GM12878 (cell line): ENCODE measurements at regions of chr2 and their contacts with region 1.

Region 1: GRCh38 chr2:212157012-212157411 is 381.6 kb downstream of the ERBB4 start:
- DNase-seq: no peak
- ATAC-seq: no peak
- H3K4me3 ChIP-seq: no peak overlapping the region
- H3K27ac ChIP-seq: no peak overlapping the region
- H3K4me1 ChIP-seq: no peaks in the 10 kb centered on the region
- H3K27me3 ChIP-seq: no peaks in the 10 kb centered on the region
- CTCF ChIP-seq: no peak
- EP300 ChIP-seq: no peak
- POLR2A ChIP-seq: no peak
- RAD21 ChIP-seq: no peak

Region 2: GRCh38 chr2:212548450-212548819 is 391.4 kb after region 1 on chr2:
- CTCF ChIA-PET with region 1: no interaction called
- POLR2A ChIA-PET with region 1: no interaction called
- RAD21 ChIA-PET with region 1: no interaction called
- SMC1A ChIA-PET with region 1: no interaction called
- in situ Hi-C with region 1: no loop called
- intact Hi-C with region 1: loop called (anchors 5 kb)
- DNase-seq: no peak
- ATAC-seq: no peak
- H3K4me3 ChIP-seq: no peak overlapping the region
- H3K27ac ChIP-seq: no peak overlapping the region
- H3K4me1 ChIP-seq: no peaks in the 10 kb centered on the region
- H3K27me3 ChIP-seq: no peaks in the 10 kb centered on the region
- CTCF ChIP-seq: peak in 2 of 3 experiments; percentile 3 to 31; a peak in 3 of 6 replicates
- EP300 ChIP-seq: no peak
- POLR2A ChIP-seq: no peak
- RAD21 ChIP-seq: peak; percentile 55